ENCODE measurements at regions of chr11 and their contacts with region 1.

Region 1: GRCh38 chr11:118530408-118531339 is at the start of gene TMEM25:
- DNase-seq: no peak
- ATAC-seq: peak; percentile 76
- H3K4me3 ChIP-seq: peak within 1 kb of the TSS; percentile 62 to 67
- H3K27ac ChIP-seq: peak within 1 kb of the TSS; percentile 64
- H3K4me1 ChIP-seq: peaks cover 21% of the 10 kb centered on the region
- H3K27me3 ChIP-seq: no peaks in the 10 kb centered on the region
- CTCF ChIP-seq: no peak
- total RNA-seq, gene TMEM25: 6.7 TPM

Region 2: GRCh38 chr11:118565051-118565450 is 34.4 kb after region 1 on chr11:
- CTCF ChIA-PET with region 1: interaction called, 4 read pairs
- POLR2A ChIA-PET with region 1: no interaction called
- in situ Hi-C with region 1: no loop called
- intact Hi-C with region 1: loop called (anchors 5 kb)
- DNase-seq: no peak
- ATAC-seq: no peak
- H3K4me3 ChIP-seq: no peak overlapping the region
- H3K27ac ChIP-seq: no peak overlapping the region; the same call in 1 of the 2 replicates
- H3K4me1 ChIP-seq: peaks cover 5% of the 10 kb centered on the region
- H3K27me3 ChIP-seq: no peaks in the 10 kb centered on the region
- CTCF ChIP-seq: no peak

Region 3: DNA sequence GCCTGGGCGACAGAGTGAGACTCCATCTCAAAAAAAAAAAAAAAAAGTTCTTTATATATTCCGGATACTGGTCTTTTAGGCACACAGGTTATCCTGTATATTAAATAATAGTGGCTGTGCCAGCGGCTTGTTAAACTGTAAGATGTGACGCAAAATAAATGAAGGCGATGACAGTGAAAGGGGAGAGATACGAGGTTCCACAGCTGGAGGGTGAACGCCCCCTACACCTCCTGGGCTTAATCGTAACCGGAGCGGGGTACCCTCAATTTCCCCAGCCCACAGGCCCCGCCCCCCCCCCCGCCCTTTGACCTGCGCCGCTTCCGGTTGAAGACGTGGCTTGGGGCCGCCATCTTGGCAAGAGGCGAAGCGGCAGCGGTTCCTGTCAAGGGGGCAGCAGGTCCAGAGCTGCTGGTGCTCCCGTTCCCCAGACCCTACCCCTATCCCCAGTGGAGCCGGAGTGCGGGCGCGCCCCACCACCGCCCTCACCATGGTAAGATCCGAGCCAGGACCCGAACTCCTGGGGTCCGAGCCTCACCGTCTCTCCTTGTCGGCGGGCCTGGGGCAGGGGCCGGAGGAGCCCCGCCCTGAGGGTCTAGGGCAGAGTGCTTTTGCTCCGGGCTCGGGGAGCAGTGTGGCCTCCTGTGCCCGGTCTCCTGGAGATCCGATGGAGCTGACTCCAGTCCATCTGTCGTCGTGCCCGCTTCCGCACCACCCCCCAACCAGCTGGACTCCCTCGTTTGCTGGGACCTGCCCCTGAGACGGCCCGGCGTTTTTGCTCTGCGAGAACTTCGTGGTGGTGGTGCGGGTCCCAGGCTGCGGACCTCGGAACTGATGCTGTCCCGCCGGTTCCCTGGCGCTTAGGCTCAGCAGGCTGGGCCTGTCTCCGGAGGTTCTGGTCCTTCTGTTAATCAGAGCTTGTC is 41.6 kb after region 1 on chr11 and contains the start of gene ARCN1:
- CTCF ChIA-PET with region 1: no interaction called
- POLR2A ChIA-PET with region 1: no interaction called
- in situ Hi-C with region 1: loop called (anchors 5 kb)
- intact Hi-C with region 1: loop called (anchors 5 kb)
- DNase-seq: no peak
- ATAC-seq: peak; percentile 92
- H3K4me3 ChIP-seq: peak within 1 kb of the TSS; percentile 92 to 93
- H3K27ac ChIP-seq: peak within 1 kb of the TSS; percentile 94
- H3K4me1 ChIP-seq: peaks cover 28% of the 10 kb centered on the region
- H3K27me3 ChIP-seq: no peaks in the 10 kb centered on the region
- CTCF ChIP-seq: no peak
- total RNA-seq, gene ARCN1: 197 TPM

Region 4: DNA sequence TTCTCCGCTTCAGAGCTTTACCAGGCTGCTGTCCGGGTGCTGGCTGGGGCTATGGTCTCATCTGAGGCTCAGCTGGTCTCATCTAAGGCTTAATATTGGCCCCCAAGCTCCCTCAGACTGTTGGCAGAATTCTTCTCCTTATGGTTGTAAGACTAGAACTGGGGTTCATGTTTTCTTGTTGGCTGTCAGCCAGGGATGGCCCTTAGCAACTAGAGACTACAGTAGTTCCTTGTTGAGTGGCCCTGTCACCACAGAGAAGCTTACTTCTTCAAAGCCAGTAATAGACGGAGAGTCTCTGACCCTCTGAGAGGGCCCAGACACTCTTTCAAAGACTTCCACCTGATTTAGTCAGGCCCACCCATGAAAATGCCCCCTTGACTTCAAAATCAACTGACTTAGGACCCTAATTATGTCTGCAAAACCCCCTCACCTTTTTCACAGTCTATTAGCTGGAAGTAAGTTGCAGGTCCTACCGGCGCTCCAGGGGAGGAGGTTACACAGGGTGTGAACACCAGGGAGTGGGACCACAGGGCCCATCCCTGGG is 173.0 kb after region 1 on chr11:
- CTCF ChIA-PET with region 1: no interaction called
- POLR2A ChIA-PET with region 1: no interaction called
- in situ Hi-C with region 1: no loop called
- intact Hi-C with region 1: no loop called
- DNase-seq: no peak
- ATAC-seq: no peak
- H3K4me3 ChIP-seq: no peak overlapping the region
- H3K27ac ChIP-seq: no peak overlapping the region
- H3K4me1 ChIP-seq: no peaks in the 10 kb centered on the region
- H3K27me3 ChIP-seq: no peaks in the 10 kb centered on the region
- CTCF ChIP-seq: no peak